Activated CD8-positive, alpha-beta T cell treated with anti-CD3 and anti-CD28 coated beads for 36 hours (primary cell): ENCODE measurements at regions of chr4 and their contacts with region 1.

Region 1: DNA sequence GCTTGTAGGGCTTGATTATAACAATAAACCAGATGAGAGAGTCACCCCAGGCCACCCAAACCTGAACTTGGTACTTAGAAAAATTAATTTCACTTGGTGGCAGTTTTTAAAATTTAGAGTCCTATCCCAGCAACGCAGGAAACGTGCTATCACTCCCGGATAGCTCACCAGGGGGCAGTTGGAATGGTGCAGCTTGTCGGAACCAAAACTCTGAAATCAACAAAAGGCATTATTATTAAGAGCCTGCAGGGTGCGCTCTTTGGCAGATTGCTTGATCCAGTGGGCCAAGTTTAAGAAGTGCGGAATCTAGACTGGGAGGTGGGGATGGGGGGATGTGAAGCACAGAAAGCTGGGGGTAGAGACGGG is 2.4 kb downstream of the FRAS1 start:
- DNase-seq: peak; percentile 31
- ATAC-seq: no peak
- H3K4me3 Mint-ChIP-seq: peak overlapping the region; percentile 81
- H3K27ac Mint-ChIP-seq: no peak overlapping the region
- H3K4me1 Mint-ChIP-seq: peaks cover 27% of the 10 kb centered on the region
- H3K27me3 Mint-ChIP-seq: peaks cover 66% of the 10 kb centered on the region
- CTCF ChIP-seq: peak; percentile 62

Region 2: GRCh38 chr4:77893451-77893850 is 166.1 kb before region 1 on chr4:
- CTCF ChIA-PET with region 1: no interaction called
- POLR2A ChIA-PET with region 1: no interaction called
- intact Hi-C with region 1: no loop called
- DNase-seq: no peak
- ATAC-seq: no peak
- H3K4me3 Mint-ChIP-seq: no peak overlapping the region
- H3K27ac Mint-ChIP-seq: peak overlapping the region; percentile 76
- H3K4me1 Mint-ChIP-seq: peaks cover 32% of the 10 kb centered on the region
- H3K27me3 Mint-ChIP-seq: no peaks in the 10 kb centered on the region
- CTCF ChIP-seq: no peak

Region 3: DNA sequence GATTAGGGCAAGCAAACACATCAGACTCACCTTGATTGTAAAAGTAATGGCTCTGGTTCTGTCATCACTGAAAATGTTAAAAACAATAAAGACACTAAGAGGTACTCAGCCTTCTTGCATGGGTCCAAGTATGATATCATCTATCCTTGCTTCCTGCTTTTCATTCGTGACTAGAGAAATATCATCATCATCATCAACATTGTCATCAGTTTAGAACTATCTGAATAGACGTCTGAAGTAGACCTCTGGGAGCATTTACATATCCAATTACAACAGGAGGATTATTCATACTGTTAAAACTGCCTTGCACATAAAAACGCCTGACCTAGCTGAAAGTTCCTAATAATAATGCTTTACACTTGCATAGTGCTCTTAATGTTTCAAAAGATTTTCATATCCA is 12.1 kb before region 1 on chr4:
- CTCF ChIA-PET with region 1: interaction called, 10 read pairs
- POLR2A ChIA-PET with region 1: no interaction called
- intact Hi-C with region 1: no loop called
- DNase-seq: no peak
- ATAC-seq: no peak
- H3K4me3 Mint-ChIP-seq: no peak overlapping the region
- H3K27ac Mint-ChIP-seq: no peak overlapping the region
- H3K4me1 Mint-ChIP-seq: no peaks in the 10 kb centered on the region
- H3K27me3 Mint-ChIP-seq: peaks cover 2% of the 10 kb centered on the region
- CTCF ChIP-seq: no peak

Region 4: GRCh38 chr4:78069859-78070258 is 10.4 kb after region 1 on chr4:
- CTCF ChIA-PET with region 1: interaction called, 15 read pairs
- POLR2A ChIA-PET with region 1: no interaction called
- intact Hi-C with region 1: no loop called
- DNase-seq: no peak
- ATAC-seq: no peak
- H3K4me3 Mint-ChIP-seq: no peak overlapping the region
- H3K27ac Mint-ChIP-seq: no peak overlapping the region
- H3K4me1 Mint-ChIP-seq: no peaks in the 10 kb centered on the region
- H3K27me3 Mint-ChIP-seq: peaks cover 27% of the 10 kb centered on the region
- CTCF ChIP-seq: no peak